ENCODE measurements at regions of chr7 and their contacts with region 1.

Region 1: GRCh38 chr7:85041605-85042216 is 145.1 kb downstream of the SEMA3D start:
- DNase-seq: peak; percentile 17 to 73
- ATAC-seq: peak; percentile 89 to 93
- H3K4me3 ChIP-seq: no peak overlapping the region
- H3K27ac ChIP-seq: no peak overlapping the region
- H3K4me1 ChIP-seq: no peaks in the 10 kb centered on the region
- CTCF ChIP-seq: peak; percentile 87
- EP300 ChIP-seq: no peak
- POLR2A ChIP-seq: no peak
- RAD21 ChIP-seq: peak; percentile 89 to 90

Region 2: DNA sequence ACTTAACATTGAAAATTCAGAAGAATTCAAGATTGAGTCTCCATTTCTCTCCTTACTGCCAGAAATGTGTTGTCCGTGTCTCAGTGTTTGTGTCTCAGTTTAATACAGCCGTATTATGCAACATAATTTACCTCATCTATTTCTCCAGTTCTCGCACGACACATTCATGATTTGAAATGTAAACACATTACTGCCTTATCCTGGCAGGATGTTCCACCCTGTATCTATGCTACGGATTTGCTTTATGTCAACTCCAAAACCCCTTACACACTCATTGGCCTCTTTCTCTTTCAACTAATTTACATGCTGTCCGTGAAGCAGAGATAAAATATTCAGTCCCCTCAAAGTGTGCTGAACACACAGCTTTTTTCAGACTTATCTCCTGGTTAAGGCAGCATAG is 798.8 kb after region 1 on chr7:
- CTCF ChIA-PET with region 1: interaction called, 11 read pairs
- POLR2A ChIA-PET with region 1: no interaction called
- DNase-seq: no peak
- ATAC-seq: no peak
- H3K4me3 ChIP-seq: no peak overlapping the region
- H3K27ac ChIP-seq: no peak overlapping the region
- H3K4me1 ChIP-seq: no peaks in the 10 kb centered on the region
- CTCF ChIP-seq: no peak
- EP300 ChIP-seq: no peak
- POLR2A ChIP-seq: no peak
- RAD21 ChIP-seq: no peak

Region 3: GRCh38 chr7:85851571-85852193 is 810.0 kb after region 1 on chr7:
- CTCF ChIA-PET with region 1: interaction called, 11 read pairs
- POLR2A ChIA-PET with region 1: no interaction called
- DNase-seq: peak; percentile 10 to 68
- ATAC-seq: 0 out of 6 replicates have a peak, but pooled peaks of 1 of the 2 experiments have one; percentile 45
- H3K4me3 ChIP-seq: no peak overlapping the region
- H3K27ac ChIP-seq: no peak overlapping the region
- H3K4me1 ChIP-seq: no peaks in the 10 kb centered on the region
- CTCF ChIP-seq: peak; percentile 73
- EP300 ChIP-seq: no peak
- POLR2A ChIP-seq: no peak
- RAD21 ChIP-seq: peak; percentile 69 to 81